ENCODE measurements at regions of chr11 and their contacts with region 1.

Region 1: DNA sequence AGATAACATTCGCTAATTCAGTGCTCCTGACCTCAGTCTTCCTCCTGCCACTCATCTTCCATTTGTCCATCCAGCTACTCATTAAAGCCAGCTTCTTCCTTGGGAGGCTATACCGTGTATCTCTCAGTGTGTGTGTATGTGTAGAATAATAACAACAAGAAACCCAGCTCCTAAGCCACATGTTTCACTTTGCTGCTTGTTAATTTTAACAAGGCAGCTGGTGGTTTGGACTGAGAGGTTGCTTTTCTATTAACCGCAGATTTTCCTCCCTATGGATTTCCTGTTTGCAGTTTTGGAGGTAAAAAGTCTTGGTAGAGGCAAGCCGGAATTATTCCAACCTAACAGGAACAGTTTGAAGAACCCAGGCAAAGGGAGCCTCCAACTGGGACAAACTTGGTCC is 165.0 kb downstream of the ADAMTS15 start:
- DNase-seq: no peak
- ATAC-seq: no peak
- H3K4me3 ChIP-seq: no peak overlapping the region
- H3K4me3 Mint-ChIP-seq: no peak overlapping the region
- H3K27ac ChIP-seq: no peak overlapping the region
- H3K27ac Mint-ChIP-seq: no peak overlapping the region
- H3K4me1 ChIP-seq: no peaks in the 10 kb centered on the region
- H3K4me1 Mint-ChIP-seq: no peaks in the 10 kb centered on the region
- H3K27me3 ChIP-seq: peaks cover 0 to 8% of the 10 kb centered on the region in 2 experiments
- H3K27me3 Mint-ChIP-seq: peaks cover 0 to under 1% of the 10 kb centered on the region in 2 donors

Region 2: GRCh38 chr11:130585545-130585944 is 27.9 kb before region 1 on chr11:
- CTCF ChIA-PET with region 1: no interaction called
- POLR2A ChIA-PET with region 1: no interaction called
- DNase-seq: no peak
- ATAC-seq: no peak
- H3K4me3 ChIP-seq: no peak overlapping the region
- H3K4me3 Mint-ChIP-seq: no peak overlapping the region
- H3K27ac ChIP-seq: no peak overlapping the region
- H3K27ac Mint-ChIP-seq: no peak overlapping the region
- H3K4me1 ChIP-seq: no peaks in the 10 kb centered on the region
- H3K4me1 Mint-ChIP-seq: no peaks in the 10 kb centered on the region
- H3K27me3 ChIP-seq: peaks cover 0 to 2% of the 10 kb centered on the region in 2 experiments
- H3K27me3 Mint-ChIP-seq: peaks cover 2 to 7% of the 10 kb centered on the region in 2 donors

Region 3: GRCh38 chr11:130601141-130601540 is 12.3 kb before region 1 on chr11:
- CTCF ChIA-PET with region 1: no interaction called
- POLR2A ChIA-PET with region 1: no interaction called
- DNase-seq: no peak
- ATAC-seq: no peak
- H3K4me3 ChIP-seq: no peak overlapping the region
- H3K4me3 Mint-ChIP-seq: no peak overlapping the region
- H3K27ac ChIP-seq: no peak overlapping the region
- H3K27ac Mint-ChIP-seq: no peak overlapping the region
- H3K4me1 ChIP-seq: no peaks in the 10 kb centered on the region
- H3K4me1 Mint-ChIP-seq: no peaks in the 10 kb centered on the region
- H3K27me3 ChIP-seq: peaks cover 0 to 3% of the 10 kb centered on the region in 2 experiments
- H3K27me3 Mint-ChIP-seq: no peaks in the 10 kb centered on the region

Region 4: DNA sequence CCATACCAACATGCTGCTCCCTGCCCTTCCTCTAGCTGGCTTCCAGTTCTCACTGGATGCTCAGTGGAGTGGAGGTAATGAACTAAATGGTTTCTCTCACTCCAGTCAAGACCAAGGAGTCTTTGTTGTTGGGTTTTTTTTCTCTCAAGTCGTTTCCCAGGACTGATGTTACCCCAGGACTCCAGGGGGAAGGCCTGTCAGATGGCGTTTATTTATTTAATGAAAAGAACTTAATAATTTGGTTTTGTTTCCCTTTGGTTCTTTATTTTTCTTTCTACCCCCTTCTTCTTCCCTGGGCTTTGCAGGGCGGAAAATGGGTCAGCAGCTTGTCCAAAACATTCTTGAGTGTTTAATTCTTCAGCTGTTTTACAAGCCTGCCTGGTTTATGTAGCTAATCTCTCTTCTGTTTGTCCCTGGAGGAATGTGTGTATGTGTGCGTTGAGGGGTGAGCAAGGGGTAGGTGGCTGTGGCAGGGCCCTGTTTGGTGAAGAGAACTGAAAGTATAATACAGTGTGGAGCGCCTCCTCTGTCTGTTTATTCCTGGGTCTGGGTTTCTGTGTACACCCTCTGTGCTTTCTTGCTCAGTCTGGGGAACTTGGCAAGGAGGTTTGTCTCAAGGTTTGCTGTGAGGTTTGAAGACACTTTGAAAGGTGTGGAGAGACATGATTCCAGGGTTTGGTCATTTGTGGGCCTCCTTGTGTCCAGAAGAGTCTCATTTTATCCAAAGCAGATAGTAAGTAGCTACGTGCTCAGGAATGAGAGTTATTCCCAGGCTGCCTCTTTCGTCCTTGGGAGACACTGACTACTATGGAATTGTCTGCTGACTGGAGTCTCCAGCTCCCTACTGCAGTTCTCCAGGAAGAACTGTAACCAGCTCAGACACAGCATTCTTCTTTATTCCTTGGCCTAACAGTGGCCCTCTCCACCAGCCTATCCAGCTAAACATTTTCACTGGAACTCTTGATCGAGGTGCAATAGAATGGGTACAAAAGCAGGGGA is 10.6 kb after region 1 on chr11:
- CTCF ChIA-PET with region 1: no interaction called
- POLR2A ChIA-PET with region 1: no interaction called
- DNase-seq: no peak
- ATAC-seq: no peak
- H3K4me3 ChIP-seq: no peak overlapping the region
- H3K4me3 Mint-ChIP-seq: no peak overlapping the region
- H3K27ac ChIP-seq: no peak overlapping the region
- H3K27ac Mint-ChIP-seq: no peak overlapping the region
- H3K4me1 ChIP-seq: no peaks in the 10 kb centered on the region
- H3K4me1 Mint-ChIP-seq: no peaks in the 10 kb centered on the region
- H3K27me3 ChIP-seq: peaks cover 0 to 3% of the 10 kb centered on the region in 2 experiments
- H3K27me3 Mint-ChIP-seq: peaks cover 21 to 27% of the 10 kb centered on the region in 2 donors

Region 5: DNA sequence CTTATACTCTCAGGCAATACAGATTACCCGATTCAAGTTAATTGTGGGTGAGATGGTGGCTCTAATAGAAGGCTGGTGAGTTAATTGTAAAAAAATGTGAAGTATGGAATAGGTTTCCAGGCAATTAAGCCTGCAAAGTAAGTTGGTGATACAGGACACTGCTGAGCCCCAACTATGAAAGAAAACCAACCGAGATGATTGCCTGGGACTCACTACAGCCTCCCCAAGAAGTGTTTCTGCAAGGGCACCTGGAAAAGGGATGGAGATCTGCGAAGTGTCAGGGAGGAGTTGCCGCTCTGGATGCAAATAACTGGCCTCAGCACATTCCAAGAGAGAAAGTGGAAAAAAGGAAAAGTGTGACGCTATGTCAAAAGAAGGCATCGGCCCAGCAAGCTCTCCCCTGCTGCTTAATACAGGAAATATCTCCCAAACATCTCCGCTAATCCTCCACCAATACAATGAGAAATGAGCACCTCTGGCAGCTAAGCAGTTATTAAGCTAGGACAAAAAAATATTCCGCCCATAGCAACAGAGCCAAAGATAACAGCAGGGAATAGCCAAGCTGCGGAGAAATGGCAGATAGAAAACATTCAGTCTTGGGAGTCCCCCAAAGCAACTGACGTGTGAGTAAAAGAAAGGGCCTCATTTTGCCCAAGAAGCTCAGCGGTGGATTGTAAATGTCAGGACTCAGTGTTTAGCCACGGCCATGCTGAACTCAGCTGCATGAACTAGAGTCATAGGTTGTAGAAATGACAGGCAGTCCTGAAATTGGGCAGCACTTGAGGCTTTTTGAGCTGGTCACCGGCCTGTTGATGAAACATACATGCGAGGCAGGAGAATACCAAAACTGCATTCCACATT is 169.2 kb after region 1 on chr11:
- CTCF ChIA-PET with region 1: no interaction called
- POLR2A ChIA-PET with region 1: no interaction called
- DNase-seq: no peak
- ATAC-seq: no peak
- H3K4me3 ChIP-seq: no peak overlapping the region
- H3K4me3 Mint-ChIP-seq: no peak overlapping the region
- H3K27ac ChIP-seq: no peak overlapping the region
- H3K27ac Mint-ChIP-seq: no peak overlapping the region
- H3K4me1 ChIP-seq: no peaks in the 10 kb centered on the region
- H3K4me1 Mint-ChIP-seq: no peaks in the 10 kb centered on the region
- H3K27me3 ChIP-seq: peaks cover 0 to 2% of the 10 kb centered on the region in 2 experiments
- H3K27me3 Mint-ChIP-seq: peaks cover 0 to 4% of the 10 kb centered on the region in 2 donors

Region 6: GRCh38 chr11:132486060-132486459 is 1872.7 kb after region 1 on chr11:
- CTCF ChIA-PET with region 1: no interaction called
- POLR2A ChIA-PET with region 1: interaction called in 1 of 2 experiments, 13 read pairs
- DNase-seq: no peak
- ATAC-seq: no peak
- H3K4me3 ChIP-seq: no peak overlapping the region
- H3K4me3 Mint-ChIP-seq: no peak overlapping the region
- H3K27ac ChIP-seq: no peak overlapping the region
- H3K27ac Mint-ChIP-seq: no peak overlapping the region
- H3K4me1 ChIP-seq: no peaks in the 10 kb centered on the region
- H3K4me1 Mint-ChIP-seq: no peaks in the 10 kb centered on the region
- H3K27me3 ChIP-seq: no peaks in the 10 kb centered on the region
- H3K27me3 Mint-ChIP-seq: no peaks in the 10 kb centered on the region